Naive thymus-derived CD4-positive, alpha-beta T cell (primary cell): ENCODE measurements at regions of chr7 and their contacts with region 1.

Region 1: GRCh38 chr7:44885394-44886317 is at the start of gene PURB:
- DNase-seq: peak; percentile 97 to 99 (median 97)
- ATAC-seq: peak; percentile 92
- H3K4me3 ChIP-seq: peak within 1 kb of the TSS; percentile 88
- H3K4me3 Mint-ChIP-seq: peak within 1 kb of the TSS; percentile 92 to 97 (median 93)
- H3K27ac ChIP-seq: peak within 1 kb of the TSS; percentile 99
- H3K27ac Mint-ChIP-seq: peak within 1 kb of the TSS; percentile 98 to 100 (median 99)
- H3K4me1 ChIP-seq: peaks cover 26 to 50% of the 10 kb centered on the region in 2 donors
- H3K4me1 Mint-ChIP-seq: peaks cover 7 to 61% (median 46%) of the 10 kb centered on the region in 7 donors
- H3K27me3 ChIP-seq: no peaks in the 10 kb centered on the region
- H3K27me3 Mint-ChIP-seq: peaks cover 0 to 2% (median 0%) of the 10 kb centered on the region in 5 donors
- total RNA-seq, gene PURB: 16.5 to 30.5 (median 23.3) TPM

Region 2: GRCh38 chr7:44573464-44574286 is 312.0 kb before region 1 on chr7 and contains the start of gene DDX56:
- CTCF ChIA-PET with region 1: no interaction called
- POLR2A ChIA-PET with region 1: interaction called, 11 read pairs
- intact Hi-C with region 1: no loop called
- DNase-seq: peak; percentile 72 to 90 (median 87)
- ATAC-seq: peak; percentile 97
- H3K4me3 ChIP-seq: peak within 1 kb of the TSS; percentile 95
- H3K4me3 Mint-ChIP-seq: peak within 1 kb of the TSS; percentile 91 to 98 (median 95)
- H3K27ac ChIP-seq: peak within 1 kb of the TSS; percentile 95
- H3K27ac Mint-ChIP-seq: peak within 1 kb of the TSS; percentile 92 to 99 (median 98)
- H3K4me1 ChIP-seq: peaks cover 19 to 27% of the 10 kb centered on the region in 2 donors
- H3K4me1 Mint-ChIP-seq: peaks cover 20 to 48% (median 33%) of the 10 kb centered on the region in 7 donors
- H3K27me3 ChIP-seq: no peaks in the 10 kb centered on the region
- H3K27me3 Mint-ChIP-seq: no peaks in the 10 kb centered on the region
- total RNA-seq, gene DDX56: 82.8 to 124 (median 100.0) TPM

Region 3: DNA sequence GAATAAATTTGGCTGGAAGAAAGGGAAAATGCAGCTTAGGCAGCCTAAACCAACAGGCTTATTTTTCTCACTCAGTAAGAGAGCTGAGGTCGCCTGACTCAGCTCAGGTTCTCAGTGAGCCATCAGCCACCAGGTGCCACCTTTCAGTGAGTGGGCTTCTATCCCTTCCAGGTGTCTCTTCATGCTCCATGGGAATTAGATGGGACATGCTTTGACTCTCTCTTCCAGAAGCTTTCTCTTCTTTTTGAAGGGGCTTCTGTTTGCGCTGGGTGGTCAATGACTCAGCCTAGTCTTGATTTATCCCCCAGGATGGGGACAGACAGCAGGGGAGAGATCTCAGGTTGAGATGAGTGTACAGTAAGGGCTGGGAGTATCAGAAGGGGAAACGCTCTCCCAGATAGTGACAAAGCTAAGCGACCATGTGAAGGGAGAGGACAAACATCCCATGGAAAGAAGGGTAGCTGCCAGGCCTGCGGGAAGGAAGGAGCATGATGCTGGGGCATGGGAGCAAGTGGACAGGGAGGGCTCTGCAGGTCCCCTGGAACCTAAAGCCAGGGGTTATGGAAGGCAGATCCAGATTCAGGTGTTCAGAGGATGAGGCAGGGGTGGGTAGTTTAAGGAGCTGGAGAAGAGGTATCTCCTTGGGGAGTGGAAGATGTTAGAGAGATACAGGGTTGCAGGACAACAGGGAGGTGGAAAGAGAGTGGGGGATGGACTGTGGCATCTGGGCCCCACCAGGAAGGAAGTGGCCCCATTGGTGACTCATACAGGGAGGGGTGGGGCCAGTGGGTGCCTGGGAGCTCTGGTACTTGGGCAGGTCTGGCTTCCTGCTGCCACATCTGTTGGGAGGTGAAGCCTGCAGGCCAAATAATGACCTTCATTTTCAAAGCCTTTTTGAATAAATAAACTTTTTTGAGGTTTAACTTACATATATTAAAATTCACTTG is 246.8 kb before region 1 on chr7:
- CTCF ChIA-PET with region 1: no interaction called
- POLR2A ChIA-PET with region 1: no interaction called
- intact Hi-C with region 1: loop called in 1 of 2 experiments (anchors 1 kb)
- DNase-seq: peak; percentile 15 to 81 (median 40)
- ATAC-seq: peak; percentile 83
- H3K4me3 ChIP-seq: peak overlapping the region; percentile 28
- H3K4me3 Mint-ChIP-seq: peak overlapping the region; percentile 57 to 95 (median 78)
- H3K27ac ChIP-seq: peak overlapping the region; percentile 79
- H3K27ac Mint-ChIP-seq: peak overlapping the region; percentile 92 to 100 (median 98)
- H3K4me1 ChIP-seq: peaks cover 37 to 77% of the 10 kb centered on the region in 2 donors
- H3K4me1 Mint-ChIP-seq: peaks cover 46 to 80% (median 57%) of the 10 kb centered on the region in 7 donors
- H3K27me3 ChIP-seq: no peaks in the 10 kb centered on the region
- H3K27me3 Mint-ChIP-seq: no peaks in the 10 kb centered on the region

Region 4: DNA sequence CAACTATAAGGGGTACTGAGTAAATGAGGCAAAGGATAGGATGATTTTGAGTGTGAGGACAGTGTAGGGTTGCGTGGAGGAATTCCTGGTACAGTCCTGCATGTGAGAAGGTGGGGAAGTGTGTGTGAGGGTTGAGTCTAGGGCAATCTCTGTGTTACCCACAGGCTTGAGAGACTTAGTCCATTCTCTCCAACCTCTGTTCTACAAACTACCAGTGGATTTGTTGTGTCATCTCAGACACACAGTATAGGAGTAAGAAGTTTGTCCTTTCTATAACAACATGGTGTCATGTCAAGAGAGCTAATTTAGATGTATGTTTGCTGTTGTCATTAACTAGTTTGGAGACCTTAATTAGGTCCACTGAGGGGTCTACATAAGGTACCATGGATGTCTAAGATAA is 12.9 kb before region 1 on chr7:
- CTCF ChIA-PET with region 1: no interaction called
- POLR2A ChIA-PET with region 1: interaction called, 10 read pairs
- intact Hi-C with region 1: no loop called
- DNase-seq: no peak
- ATAC-seq: no peak
- H3K4me3 ChIP-seq: no peak overlapping the region
- H3K4me3 Mint-ChIP-seq: no peak overlapping the region
- H3K27ac ChIP-seq: no peak overlapping the region
- H3K27ac Mint-ChIP-seq: no peak overlapping the region
- H3K4me1 ChIP-seq: no peaks in the 10 kb centered on the region
- H3K4me1 Mint-ChIP-seq: peaks cover 0 to 6% (median 0%) of the 10 kb centered on the region in 7 donors
- H3K27me3 ChIP-seq: no peaks in the 10 kb centered on the region
- H3K27me3 Mint-ChIP-seq: no peaks in the 10 kb centered on the region

Region 5: GRCh38 chr7:44980393-44981034 is 94.9 kb after region 1 on chr7:
- CTCF ChIA-PET with region 1: no interaction called
- POLR2A ChIA-PET with region 1: interaction called, 4 read pairs
- intact Hi-C with region 1: loop called (anchors 1 to 2 kb)
- DNase-seq: peak in 2 of 9 donors; percentile 63 to 69
- ATAC-seq: peak; percentile 38
- H3K4me3 ChIP-seq: peak overlapping the region; percentile 78
- H3K4me3 Mint-ChIP-seq: peak overlapping the region; percentile 39 to 100 (median 70)
- H3K27ac ChIP-seq: peak overlapping the region; percentile 83
- H3K27ac Mint-ChIP-seq: peak overlapping the region; percentile 85 to 99 (median 96)
- H3K4me1 ChIP-seq: peaks cover 60 to 63% of the 10 kb centered on the region in 2 donors
- H3K4me1 Mint-ChIP-seq: peaks cover 54 to 96% (median 68%) of the 10 kb centered on the region in 7 donors
- H3K27me3 ChIP-seq: no peaks in the 10 kb centered on the region
- H3K27me3 Mint-ChIP-seq: no peaks in the 10 kb centered on the region

Region 6: DNA sequence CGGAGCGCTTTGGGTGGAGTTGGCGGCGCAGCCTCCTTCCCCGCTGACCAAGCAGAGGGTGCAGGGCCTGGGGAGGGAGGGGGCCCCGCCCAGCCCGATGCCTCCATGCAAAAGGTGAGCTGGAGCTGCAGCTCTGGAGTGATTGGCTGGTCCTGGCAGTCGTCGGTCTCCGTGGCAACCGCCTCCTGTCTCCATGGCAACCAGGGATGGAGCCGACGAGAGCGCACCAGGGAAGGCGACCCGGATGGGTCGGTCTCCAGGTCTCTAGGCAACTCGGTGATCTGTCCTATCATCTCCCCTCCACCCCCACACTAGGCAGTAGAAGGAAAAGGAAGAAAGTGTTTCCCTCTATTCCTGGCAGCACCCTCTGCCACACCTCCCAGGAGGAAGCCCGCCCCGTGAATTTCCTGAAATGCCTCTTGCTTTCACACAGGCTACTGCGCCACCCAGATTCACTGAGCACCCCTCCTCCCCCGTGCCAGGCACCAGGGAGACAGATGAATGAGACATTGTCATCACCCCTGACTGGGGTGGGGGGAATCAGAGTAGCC is 203.8 kb after region 1 on chr7:
- CTCF ChIA-PET with region 1: no interaction called
- POLR2A ChIA-PET with region 1: no interaction called
- intact Hi-C with region 1: loop called in 1 of 2 experiments (anchors 1 kb)
- DNase-seq: peak; percentile 34 to 67 (median 54)
- ATAC-seq: peak; percentile 60
- H3K4me3 ChIP-seq: peak overlapping the region; percentile 51
- H3K4me3 Mint-ChIP-seq: peak overlapping the region; percentile 51 to 79 (median 70)
- H3K27ac ChIP-seq: no peak overlapping the region
- H3K27ac Mint-ChIP-seq: peak overlapping the region in 4 of 9 donors; percentile 44 to 60 (median 50)
- H3K4me1 ChIP-seq: peaks cover 0 to 11% of the 10 kb centered on the region in 2 donors
- H3K4me1 Mint-ChIP-seq: peaks cover 0 to 9% (median 8%) of the 10 kb centered on the region in 7 donors
- H3K27me3 ChIP-seq: no peaks in the 10 kb centered on the region
- H3K27me3 Mint-ChIP-seq: peaks cover 7 to 41% (median 8%) of the 10 kb centered on the region in 5 donors

Region 7: GRCh38 chr7:45359776-45360175 is 474.1 kb after region 1 on chr7:
- CTCF ChIA-PET with region 1: no interaction called
- POLR2A ChIA-PET with region 1: no interaction called
- intact Hi-C with region 1: no loop called
- DNase-seq: no peak
- ATAC-seq: no peak
- H3K4me3 ChIP-seq: no peak overlapping the region
- H3K4me3 Mint-ChIP-seq: no peak overlapping the region
- H3K27ac ChIP-seq: no peak overlapping the region
- H3K27ac Mint-ChIP-seq: no peak overlapping the region
- H3K4me1 ChIP-seq: no peaks in the 10 kb centered on the region
- H3K4me1 Mint-ChIP-seq: no peaks in the 10 kb centered on the region
- H3K27me3 ChIP-seq: no peaks in the 10 kb centered on the region
- H3K27me3 Mint-ChIP-seq: peaks cover 12 to 22% (median 18%) of the 10 kb centered on the region in 5 donors